K562 (cell line): ENCODE measurements at regions of chr2 and their contacts with region 1.

Region 1: DNA sequence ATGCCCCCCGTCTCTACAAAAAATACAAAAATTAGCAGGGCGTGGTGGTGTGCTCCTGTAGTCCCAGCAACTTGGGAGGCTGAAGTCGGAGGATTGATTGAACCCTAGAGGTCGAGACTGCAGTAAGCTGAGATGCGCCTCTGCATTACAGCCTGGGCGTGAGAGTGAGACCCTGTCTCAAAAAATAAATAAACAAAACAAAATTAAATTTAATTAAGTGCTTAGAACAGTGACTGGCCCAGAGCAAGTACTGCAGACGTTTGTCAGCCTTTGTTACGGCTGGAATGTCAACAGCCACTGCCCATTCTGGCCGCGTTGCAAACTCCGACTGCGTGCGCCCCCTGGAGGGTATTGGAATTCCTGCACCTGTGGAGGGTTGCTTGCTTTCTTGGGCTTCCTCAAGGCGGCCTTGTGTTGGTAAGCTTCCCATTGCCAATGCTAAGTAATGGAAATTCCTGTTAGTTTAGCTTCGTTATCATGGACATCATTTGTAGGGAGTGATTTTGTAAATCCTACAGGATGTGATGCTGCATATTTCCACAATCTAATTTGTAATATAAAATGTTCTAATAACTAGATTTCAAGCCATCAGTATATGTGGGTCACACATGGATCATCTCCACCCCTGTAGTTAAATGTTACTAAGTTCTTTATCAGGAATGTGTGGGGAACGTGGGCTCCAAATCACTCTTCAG is 15.9 kb upstream of the ATP6V1B1 start:
- DNase-seq: peak; percentile 72 to 82 (median 80)
- ATAC-seq: peak; percentile 95
- H3K4me3 ChIP-seq: no peak overlapping the region
- H3K27ac ChIP-seq: no peak overlapping the region
- H3K4me1 ChIP-seq: peaks cover 0 to 3% of the 10 kb centered on the region in 2 experiments; a peak in 1 of 5 replicates
- H3K27me3 ChIP-seq: peaks cover 2 to 28% of the 10 kb centered on the region in 2 experiments; a peak in 3 of 5 replicates
- CTCF ChIP-seq: peak; percentile 93 to 95 (median 94)
- EP300 ChIP-seq: no peak
- POLR2A ChIP-seq: no peak
- RAD21 ChIP-seq: peak; percentile 42 to 75

Region 2: GRCh38 chr2:70861777-70862625 is 57.8 kb before region 1 on chr2:
- CTCF ChIA-PET with region 1: interaction called, 11 read pairs
- POLR2A ChIA-PET with region 1: no interaction called
- in situ Hi-C with region 1: no loop called
- intact Hi-C with region 1: no loop called
- DNase-seq: peak; percentile 79 to 88 (median 85)
- ATAC-seq: peak; percentile 99
- H3K4me3 ChIP-seq: no peak overlapping the region
- H3K27ac ChIP-seq: no peak overlapping the region
- H3K4me1 ChIP-seq: no peaks in the 10 kb centered on the region
- H3K27me3 ChIP-seq: peaks cover 31 to 40% of the 10 kb centered on the region in 2 experiments; a peak in 3 of 5 replicates
- CTCF ChIP-seq: peak; percentile 98
- EP300 ChIP-seq: no peak
- POLR2A ChIP-seq: no peak
- RAD21 ChIP-seq: peak; percentile 44 to 85; a peak in 3 of 4 replicates

Region 3: GRCh38 chr2:70871398-70872211 is 48.2 kb before region 1 on chr2:
- CTCF ChIA-PET with region 1: interaction called, 6 read pairs
- POLR2A ChIA-PET with region 1: interaction called, 3 read pairs
- in situ Hi-C with region 1: no loop called
- intact Hi-C with region 1: loop called (anchors 1 kb)
- DNase-seq: peak; percentile 78 to 86 (median 84)
- ATAC-seq: peak; percentile 99
- H3K4me3 ChIP-seq: no peak overlapping the region
- H3K27ac ChIP-seq: no peak overlapping the region
- H3K4me1 ChIP-seq: peaks cover 0 to 7% of the 10 kb centered on the region in 2 experiments; a peak in 1 of 5 replicates
- H3K27me3 ChIP-seq: peaks cover 2 to 30% of the 10 kb centered on the region in 2 experiments; a peak in 4 of 5 replicates
- CTCF ChIP-seq: peak; percentile 89 to 98 (median 92)
- EP300 ChIP-seq: no peak
- POLR2A ChIP-seq: no peak
- RAD21 ChIP-seq: peak; percentile 67 to 88

Region 4: GRCh38 chr2:71000780-71001591 is 81.2 kb after region 1 on chr2:
- CTCF ChIA-PET with region 1: no interaction called
- POLR2A ChIA-PET with region 1: no interaction called
- in situ Hi-C with region 1: no loop called
- intact Hi-C with region 1: no loop called
- DNase-seq: peak; percentile 77 to 86 (median 79)
- ATAC-seq: peak; percentile 95
- H3K4me3 ChIP-seq: peak overlapping the region; percentile 23
- H3K27ac ChIP-seq: peak overlapping the region; percentile 22; the same call in 2 of the 3 replicates
- H3K4me1 ChIP-seq: peaks cover 15 to 17% of the 10 kb centered on the region in 2 experiments; a peak in 4 of 5 replicates
- H3K27me3 ChIP-seq: no peaks in the 10 kb centered on the region
- CTCF ChIP-seq: peak; percentile 89 to 95 (median 91)
- EP300 ChIP-seq: no peak
- POLR2A ChIP-seq: peak; percentile 59
- RAD21 ChIP-seq: peak in 1 of 2 experiments; percentile 51; a peak in 2 of 4 replicates